B cell (primary cell): ENCODE measurements at regions of chr6 and their contacts with region 1.

Region 1: GRCh38 chr6:10510592-10511367 is 10.4 kb upstream of the GCNT2 start:
- DNase-seq: peak; percentile 77
- ATAC-seq: peak; percentile 100
- H3K4me3 ChIP-seq: no peak overlapping the region
- H3K4me3 Mint-ChIP-seq: peak overlapping the region; percentile 65
- H3K27ac ChIP-seq: no peak overlapping the region
- H3K27ac Mint-ChIP-seq: no peak overlapping the region
- H3K4me1 ChIP-seq: peaks cover 0 to 5% of the 10 kb centered on the region in 2 donors
- H3K4me1 Mint-ChIP-seq: peaks cover 8% of the 10 kb centered on the region
- H3K27me3 ChIP-seq: no peaks in the 10 kb centered on the region
- H3K27me3 Mint-ChIP-seq: no peaks in the 10 kb centered on the region
- CTCF ChIP-seq: peak; percentile 87

Region 2: GRCh38 chr6:10521104-10521808 is 10.5 kb after region 1 on chr6 and contains the start of gene GCNT2:
- CTCF ChIA-PET with region 1: interaction called, 40 read pairs
- POLR2A ChIA-PET with region 1: no interaction called
- intact Hi-C with region 1: no loop called
- DNase-seq: no peak
- ATAC-seq: peak; percentile 21
- H3K4me3 ChIP-seq: no peak within 1 kb of the TSS
- H3K4me3 Mint-ChIP-seq: peak within 1 kb of the TSS; percentile 32
- H3K27ac ChIP-seq: no peak within 1 kb of the TSS
- H3K27ac Mint-ChIP-seq: peak within 1 kb of the TSS; percentile 50
- H3K4me1 ChIP-seq: peaks cover 14 to 19% of the 10 kb centered on the region in 2 donors
- H3K4me1 Mint-ChIP-seq: peaks cover 28% of the 10 kb centered on the region
- H3K27me3 ChIP-seq: no peaks in the 10 kb centered on the region
- H3K27me3 Mint-ChIP-seq: no peaks in the 10 kb centered on the region
- CTCF ChIP-seq: no peak
- total RNA-seq, gene GCNT2: 32.1 and 38.1 TPM in 2 replicates

Region 3: GRCh38 chr6:10534419-10534762 is 23.6 kb after region 1 on chr6:
- CTCF ChIA-PET with region 1: interaction called, 25 read pairs
- POLR2A ChIA-PET with region 1: interaction called, 4 read pairs
- intact Hi-C with region 1: loop called (anchors 1 kb)
- DNase-seq: peak; percentile 77
- ATAC-seq: peak; percentile 65
- H3K4me3 ChIP-seq: peak overlapping the region in 2 of 5 experiments; percentile 9 to 63
- H3K4me3 Mint-ChIP-seq: peak overlapping the region; percentile 74
- H3K27ac ChIP-seq: peak overlapping the region; percentile 56 to 86
- H3K27ac Mint-ChIP-seq: peak overlapping the region; percentile 95
- H3K4me1 ChIP-seq: peaks cover 67 to 76% of the 10 kb centered on the region in 2 donors
- H3K4me1 Mint-ChIP-seq: peaks cover 80% of the 10 kb centered on the region
- H3K27me3 ChIP-seq: no peaks in the 10 kb centered on the region
- H3K27me3 Mint-ChIP-seq: no peaks in the 10 kb centered on the region
- CTCF ChIP-seq: no peak

Region 4: DNA sequence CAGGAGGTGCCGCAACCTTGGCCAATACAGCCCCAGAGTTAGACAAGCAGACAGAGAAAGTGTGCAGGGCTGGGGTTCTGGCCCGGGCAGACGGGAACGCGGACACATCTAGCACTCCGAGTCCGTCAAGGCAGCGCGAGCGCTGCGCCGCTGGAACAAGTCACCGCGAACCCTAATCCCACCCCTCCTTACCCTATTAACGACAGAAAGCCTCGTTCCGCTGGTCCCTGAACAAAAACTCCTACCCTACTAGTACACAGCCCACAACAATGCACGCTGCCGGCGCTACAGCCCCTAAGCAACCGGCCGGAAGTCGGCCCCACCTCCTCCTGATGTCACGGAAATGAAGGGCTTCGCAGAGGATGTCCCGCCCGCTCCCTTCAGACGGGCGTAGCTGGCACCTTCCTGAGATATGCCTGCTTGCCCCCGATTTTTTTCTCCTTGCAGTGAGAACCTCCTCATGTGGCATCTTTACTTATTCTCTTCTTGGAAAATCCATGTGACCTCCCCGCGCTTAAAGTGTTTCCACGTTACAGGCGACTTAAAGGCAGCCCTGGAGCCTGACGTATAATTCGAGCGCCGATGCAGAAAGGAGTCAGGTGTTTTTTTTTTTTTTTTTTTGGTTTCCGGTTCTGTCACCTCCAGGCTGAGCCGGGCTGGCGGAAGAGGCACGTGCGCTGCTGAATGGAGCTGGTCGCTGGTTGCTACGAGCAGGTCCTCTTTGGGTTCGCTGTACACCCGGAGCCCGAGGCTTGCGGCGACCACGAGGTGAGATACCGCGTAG is 183.7 kb after region 1 on chr6 and contains the starts of genes C6orf52 and PAK1IP1:
- CTCF ChIA-PET with region 1: interaction called, 39 read pairs
- POLR2A ChIA-PET with region 1: interaction called, 4 read pairs
- intact Hi-C with region 1: loop called (anchors 1 kb)
- DNase-seq: peak; percentile 98
- ATAC-seq: peak; percentile 94
- H3K4me3 ChIP-seq: peak within 1 kb of the TSS; percentile 73 to 97 (median 95)
- H3K4me3 Mint-ChIP-seq: peak within 1 kb of the TSS; percentile 97
- H3K27ac ChIP-seq: peak within 1 kb of the TSS; percentile 96 to 99
- H3K27ac Mint-ChIP-seq: peak within 1 kb of the TSS; percentile 100
- H3K4me1 ChIP-seq: peaks cover 16 to 28% of the 10 kb centered on the region in 2 donors
- H3K4me1 Mint-ChIP-seq: peaks cover 30% of the 10 kb centered on the region
- H3K27me3 ChIP-seq: no peaks in the 10 kb centered on the region
- H3K27me3 Mint-ChIP-seq: no peaks in the 10 kb centered on the region
- CTCF ChIP-seq: no peak
- total RNA-seq, gene C6orf52: 1.2 TPM in 1 of 2 replicates, not detected in the other
- total RNA-seq, gene PAK1IP1: 6.1 TPM in 2 replicates

Region 5: DNA sequence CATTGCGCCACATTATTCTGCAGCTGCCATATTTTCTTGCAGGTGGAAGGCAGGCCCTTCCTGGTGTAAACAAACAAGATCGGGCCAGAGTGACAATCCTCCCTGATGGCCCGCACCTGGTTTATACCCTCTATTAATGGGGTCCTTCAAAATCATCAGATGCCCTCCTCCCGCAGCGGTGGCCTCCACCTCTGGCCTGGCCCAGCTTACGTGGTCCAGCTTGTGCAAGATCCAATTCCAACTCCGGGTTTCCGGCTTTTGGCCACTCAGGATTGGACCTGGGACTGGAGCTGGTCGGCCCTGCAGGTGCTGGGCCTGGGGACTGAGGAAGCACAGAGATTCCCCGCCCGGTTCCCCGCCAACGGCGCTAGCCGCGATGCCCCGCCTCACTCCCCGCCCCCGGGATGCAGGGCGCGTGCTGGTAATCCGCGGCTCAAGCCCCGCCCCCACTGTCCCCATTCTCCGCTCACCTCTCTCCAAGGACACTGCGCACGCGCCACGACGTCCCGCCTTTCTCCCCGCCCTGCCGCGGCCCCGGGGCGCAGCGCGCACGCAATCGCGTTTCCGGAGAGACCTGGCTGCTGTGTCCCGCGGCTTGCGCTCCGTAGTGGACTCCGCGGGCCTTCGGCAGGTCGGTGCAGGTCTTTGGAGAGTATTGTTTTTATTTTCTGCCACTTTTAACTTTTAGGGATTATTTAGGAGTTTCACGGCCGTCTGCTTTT is 236.6 kb after region 1 on chr6 and contains the start of gene TMEM14B:
- CTCF ChIA-PET with region 1: interaction called, 18 read pairs
- POLR2A ChIA-PET with region 1: no interaction called
- intact Hi-C with region 1: loop called (anchors 1 kb)
- DNase-seq: peak; percentile 99
- ATAC-seq: peak; percentile 98
- H3K4me3 ChIP-seq: peak within 1 kb of the TSS; percentile 64 to 89 (median 85)
- H3K4me3 Mint-ChIP-seq: peak within 1 kb of the TSS; percentile 95
- H3K27ac ChIP-seq: peak within 1 kb of the TSS; percentile 56 to 76
- H3K27ac Mint-ChIP-seq: peak within 1 kb of the TSS; percentile 91
- H3K4me1 ChIP-seq: peaks cover 17 to 25% of the 10 kb centered on the region in 2 donors
- H3K4me1 Mint-ChIP-seq: peaks cover 29% of the 10 kb centered on the region
- H3K27me3 ChIP-seq: no peaks in the 10 kb centered on the region
- H3K27me3 Mint-ChIP-seq: no peaks in the 10 kb centered on the region
- CTCF ChIP-seq: no peak
- total RNA-seq, gene TMEM14B: 53.0 and 58.5 TPM in 2 replicates

Region 6: DNA sequence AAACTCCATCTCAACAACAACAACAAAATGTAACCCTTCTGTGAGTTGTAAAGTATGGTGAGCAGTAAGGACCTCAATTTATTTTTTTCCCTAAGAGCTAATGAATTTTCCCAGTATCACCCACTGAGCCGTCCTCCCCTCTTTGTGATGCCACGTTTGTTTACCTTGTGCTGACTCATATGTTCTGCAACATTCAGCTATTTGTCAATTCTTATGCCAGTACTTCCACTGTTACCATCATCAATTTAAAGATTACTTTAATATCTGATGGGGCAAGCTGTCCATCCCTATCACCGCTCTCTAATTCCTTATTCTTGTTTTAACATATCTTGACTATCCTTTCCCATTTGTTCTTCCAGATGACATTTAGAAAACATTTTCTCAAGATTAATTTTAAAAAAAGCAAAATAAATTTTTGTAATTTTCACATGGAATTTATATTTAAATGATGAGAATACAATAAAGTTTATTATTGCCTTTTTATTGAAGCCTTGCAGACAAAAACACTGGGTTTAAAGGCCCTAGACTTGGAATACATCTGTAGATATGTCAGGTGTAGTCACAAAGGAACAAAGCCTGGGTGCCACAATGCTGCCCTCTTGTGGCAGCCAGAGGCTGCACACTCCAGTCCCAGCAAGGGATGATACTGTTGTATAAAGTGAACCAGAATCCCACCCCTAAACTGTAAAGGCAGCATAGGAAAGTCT is 290.2 kb after region 1 on chr6:
- CTCF ChIA-PET with region 1: interaction called, 98 read pairs
- POLR2A ChIA-PET with region 1: no interaction called
- intact Hi-C with region 1: no loop called
- DNase-seq: peak; percentile 73
- ATAC-seq: peak; percentile 83
- H3K4me3 ChIP-seq: no peak overlapping the region
- H3K4me3 Mint-ChIP-seq: no peak overlapping the region
- H3K27ac ChIP-seq: no peak overlapping the region
- H3K27ac Mint-ChIP-seq: no peak overlapping the region
- H3K4me1 ChIP-seq: no peaks in the 10 kb centered on the region
- H3K4me1 Mint-ChIP-seq: no peaks in the 10 kb centered on the region
- H3K27me3 ChIP-seq: no peaks in the 10 kb centered on the region
- H3K27me3 Mint-ChIP-seq: no peaks in the 10 kb centered on the region
- CTCF ChIP-seq: peak; percentile 99